ENCODE measurements at regions of chr6 and their contacts with region 1.

Region 1: DNA sequence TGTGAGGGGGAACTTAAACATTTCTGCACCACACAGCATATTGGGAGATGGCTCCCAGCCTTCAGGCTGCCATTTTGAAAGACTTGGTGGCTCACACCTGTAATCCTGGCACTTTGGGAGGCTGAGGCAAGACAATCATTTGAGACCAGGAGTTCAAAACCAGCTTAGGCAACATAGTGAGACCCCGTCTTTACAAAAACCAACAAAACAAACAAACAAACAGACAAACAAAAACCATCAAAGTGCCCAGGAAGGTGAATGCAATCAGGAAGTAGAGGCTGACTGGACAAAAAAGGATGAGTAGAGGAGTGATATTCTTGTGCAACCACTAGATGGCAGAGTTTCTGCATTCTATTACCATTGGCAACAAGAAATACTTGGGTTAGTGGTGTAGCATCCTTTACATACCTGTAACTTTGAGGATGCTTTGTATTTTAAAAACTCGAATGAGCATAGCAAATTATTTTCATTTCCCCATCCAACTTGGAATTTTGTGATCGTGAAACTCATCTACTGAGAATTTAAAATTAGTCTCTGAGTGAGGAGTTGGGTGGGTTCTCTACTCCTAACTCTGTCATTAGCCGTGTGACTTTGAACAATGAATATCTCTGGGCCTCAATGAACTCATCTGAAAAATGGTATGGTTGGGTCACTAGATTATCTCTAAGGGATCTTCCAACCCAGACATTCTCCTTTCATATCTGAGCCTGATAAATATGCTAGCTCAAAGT is 84.4 kb downstream of the CRYBG1 start:
- DNase-seq: peak in 4 of 14 experiments; percentile 49 to 83 (median 81)
- ATAC-seq: peak; percentile 88
- H3K4me3 ChIP-seq: no peak overlapping the region
- H3K4me3 Mint-ChIP-seq: no peak overlapping the region
- H3K27ac ChIP-seq: no peak overlapping the region
- H3K27ac Mint-ChIP-seq: no peak overlapping the region
- H3K4me1 ChIP-seq: peaks cover 9% of the 10 kb centered on the region
- H3K4me1 Mint-ChIP-seq: peaks cover 15% of the 10 kb centered on the region
- H3K27me3 ChIP-seq: peaks cover 4 to 23% of the 10 kb centered on the region in 2 experiments
- H3K27me3 Mint-ChIP-seq: peaks cover 30% of the 10 kb centered on the region
- CTCF ChIP-seq: peak; percentile 78

Region 2: DNA sequence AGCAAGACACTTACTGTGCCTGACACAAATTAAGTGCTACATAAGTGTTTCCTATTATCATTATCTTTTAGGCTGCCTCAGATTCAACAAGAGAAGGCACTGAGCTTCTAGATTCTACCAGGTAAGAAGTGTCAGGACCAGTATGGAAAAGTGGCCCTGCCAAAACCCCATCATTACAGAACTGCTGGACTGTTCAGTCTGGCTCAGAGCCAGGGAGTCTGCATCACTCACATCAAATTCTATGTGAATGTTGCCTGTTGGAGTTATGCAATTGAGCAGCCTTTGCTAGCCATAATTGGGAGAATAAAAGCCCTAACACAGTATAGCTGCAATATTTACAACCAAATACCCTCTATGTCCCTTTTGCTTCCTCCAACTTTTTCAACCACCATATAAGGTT is 190.3 kb before region 1 on chr6:
- CTCF ChIA-PET with region 1: no interaction called
- POLR2A ChIA-PET with region 1: no interaction called
- intact Hi-C with region 1: no loop called
- DNase-seq: no peak
- ATAC-seq: no peak
- H3K4me3 ChIP-seq: no peak overlapping the region
- H3K4me3 Mint-ChIP-seq: no peak overlapping the region
- H3K27ac ChIP-seq: no peak overlapping the region
- H3K27ac Mint-ChIP-seq: no peak overlapping the region
- H3K4me1 ChIP-seq: no peaks in the 10 kb centered on the region
- H3K4me1 Mint-ChIP-seq: peaks cover 33% of the 10 kb centered on the region
- H3K27me3 ChIP-seq: no peaks in the 10 kb centered on the region
- H3K27me3 Mint-ChIP-seq: no peaks in the 10 kb centered on the region
- CTCF ChIP-seq: no peak

Region 3: DNA sequence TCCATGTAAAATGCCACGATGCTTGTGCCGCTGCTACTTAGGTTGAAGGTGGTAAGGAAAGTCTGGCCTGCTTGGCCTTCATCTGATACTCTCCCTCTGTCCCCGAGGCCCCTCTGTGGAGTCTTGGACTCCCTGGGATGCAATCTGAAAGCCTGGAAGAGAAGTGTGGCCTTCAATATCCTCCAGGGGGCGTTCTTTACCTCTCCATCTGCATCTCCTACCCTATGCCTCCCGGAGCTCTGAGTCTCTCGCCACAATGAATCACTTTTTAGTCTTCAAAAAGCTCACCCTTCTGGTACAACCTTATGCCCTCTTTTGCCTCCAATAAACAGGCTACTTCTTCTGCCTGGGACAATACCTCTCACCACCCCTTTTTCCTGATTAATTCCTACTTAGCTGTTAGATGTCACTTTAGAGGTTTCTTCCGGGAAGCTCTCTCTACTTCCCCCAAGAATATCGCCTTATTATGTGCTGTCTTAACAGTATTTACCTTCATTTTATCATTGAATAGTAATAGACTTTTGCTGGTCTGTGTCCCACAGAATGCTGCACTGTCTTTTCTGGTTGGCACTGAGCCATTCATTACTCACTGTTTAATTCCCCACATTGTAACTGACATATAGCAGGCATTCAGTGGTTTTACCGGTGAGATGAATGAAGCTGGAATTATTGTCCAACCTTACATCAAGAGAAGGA is 105.5 kb before region 1 on chr6:
- CTCF ChIA-PET with region 1: interaction called, 10 read pairs
- POLR2A ChIA-PET with region 1: no interaction called
- intact Hi-C with region 1: loop called (anchors 1 to 5 kb)
- DNase-seq: peak in 12 of 14 experiments; percentile 4 to 74 (median 32)
- ATAC-seq: peak; percentile 80
- H3K4me3 ChIP-seq: no peak overlapping the region
- H3K4me3 Mint-ChIP-seq: no peak overlapping the region
- H3K27ac ChIP-seq: no peak overlapping the region
- H3K27ac Mint-ChIP-seq: no peak overlapping the region
- H3K4me1 ChIP-seq: peaks cover 3% of the 10 kb centered on the region
- H3K4me1 Mint-ChIP-seq: no peaks in the 10 kb centered on the region
- H3K27me3 ChIP-seq: peaks cover 5 to 8% of the 10 kb centered on the region in 2 experiments
- H3K27me3 Mint-ChIP-seq: peaks cover 52% of the 10 kb centered on the region
- CTCF ChIP-seq: peak; percentile 73

Region 4: GRCh38 chr6:106556368-106556960 is 111.5 kb after region 1 on chr6:
- CTCF ChIA-PET with region 1: interaction called, 3 read pairs
- POLR2A ChIA-PET with region 1: interaction called, 3 read pairs
- intact Hi-C with region 1: loop called in 1 of 2 experiments (anchors 2 kb)
- DNase-seq: peak in 3 of 14 experiments; percentile 63 to 68 (median 64)
- ATAC-seq: peak; percentile 58
- H3K4me3 ChIP-seq: no peak overlapping the region
- H3K4me3 Mint-ChIP-seq: no peak overlapping the region
- H3K27ac ChIP-seq: no peak overlapping the region
- H3K27ac Mint-ChIP-seq: no peak overlapping the region
- H3K4me1 ChIP-seq: no peaks in the 10 kb centered on the region
- H3K4me1 Mint-ChIP-seq: no peaks in the 10 kb centered on the region
- H3K27me3 ChIP-seq: no peaks in the 10 kb centered on the region
- H3K27me3 Mint-ChIP-seq: no peaks in the 10 kb centered on the region
- CTCF ChIP-seq: peak; percentile 75

Measured in CD4-positive, alpha-beta T cell (primary cell).